Activated CD8-positive, alpha-beta memory T cell treated with anti-CD3 and anti-CD28 coated beads, Interleukin-2, amount 10 ng/mL, durations not matched to agents 7 days and 5 days (primary cell): ENCODE measurements at regions of chr16 and their contacts with region 1.

Region 1: DNA sequence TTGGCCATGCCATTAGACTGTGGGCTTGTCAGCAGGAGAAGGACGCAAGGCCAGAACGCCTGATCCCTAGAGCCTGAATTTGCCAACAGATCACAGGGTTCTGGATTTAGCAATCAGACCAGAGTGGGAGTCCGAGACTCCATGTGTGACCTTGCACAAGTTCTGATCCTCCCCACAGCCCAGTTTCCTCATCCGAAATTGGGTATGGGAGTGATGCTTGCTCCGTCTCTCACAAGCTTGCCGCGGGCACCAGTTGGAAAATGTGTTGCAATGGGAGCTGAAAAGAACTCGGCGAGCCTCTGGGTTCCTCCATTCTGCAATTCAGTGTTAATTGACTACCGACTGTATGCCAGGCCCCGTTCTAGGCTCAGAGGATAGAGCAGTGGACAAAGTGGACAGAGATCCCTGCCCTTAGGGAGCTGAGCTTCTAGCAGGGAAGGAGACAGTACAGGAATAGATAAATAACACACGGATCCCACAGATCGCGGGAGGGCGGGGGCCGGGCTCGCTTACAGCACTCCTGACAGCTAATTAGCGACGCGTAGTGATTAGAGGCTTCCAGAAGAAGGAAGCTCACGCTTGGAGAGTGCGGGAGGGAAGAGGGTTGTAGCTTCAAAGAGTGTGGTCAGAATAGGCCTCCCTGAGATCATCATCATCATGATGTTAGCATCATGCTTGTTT is 150.4 kb upstream of the CIBAR2 start:
- DNase-seq: no peak
- ATAC-seq: no peak
- H3K4me3 Mint-ChIP-seq: no peak overlapping the region
- H3K27ac Mint-ChIP-seq: no peak overlapping the region
- H3K4me1 Mint-ChIP-seq: no peaks in the 10 kb centered on the region
- H3K27me3 Mint-ChIP-seq: peaks cover 41% of the 10 kb centered on the region

Region 2: GRCh38 chr16:85220125-85220839 is 42.4 kb before region 1 on chr16:
- CTCF ChIA-PET with region 1: no interaction called
- DNase-seq: no peak
- ATAC-seq: no peak
- H3K4me3 Mint-ChIP-seq: no peak overlapping the region
- H3K27ac Mint-ChIP-seq: no peak overlapping the region
- H3K4me1 Mint-ChIP-seq: no peaks in the 10 kb centered on the region
- H3K27me3 Mint-ChIP-seq: no peaks in the 10 kb centered on the region

Region 3: DNA sequence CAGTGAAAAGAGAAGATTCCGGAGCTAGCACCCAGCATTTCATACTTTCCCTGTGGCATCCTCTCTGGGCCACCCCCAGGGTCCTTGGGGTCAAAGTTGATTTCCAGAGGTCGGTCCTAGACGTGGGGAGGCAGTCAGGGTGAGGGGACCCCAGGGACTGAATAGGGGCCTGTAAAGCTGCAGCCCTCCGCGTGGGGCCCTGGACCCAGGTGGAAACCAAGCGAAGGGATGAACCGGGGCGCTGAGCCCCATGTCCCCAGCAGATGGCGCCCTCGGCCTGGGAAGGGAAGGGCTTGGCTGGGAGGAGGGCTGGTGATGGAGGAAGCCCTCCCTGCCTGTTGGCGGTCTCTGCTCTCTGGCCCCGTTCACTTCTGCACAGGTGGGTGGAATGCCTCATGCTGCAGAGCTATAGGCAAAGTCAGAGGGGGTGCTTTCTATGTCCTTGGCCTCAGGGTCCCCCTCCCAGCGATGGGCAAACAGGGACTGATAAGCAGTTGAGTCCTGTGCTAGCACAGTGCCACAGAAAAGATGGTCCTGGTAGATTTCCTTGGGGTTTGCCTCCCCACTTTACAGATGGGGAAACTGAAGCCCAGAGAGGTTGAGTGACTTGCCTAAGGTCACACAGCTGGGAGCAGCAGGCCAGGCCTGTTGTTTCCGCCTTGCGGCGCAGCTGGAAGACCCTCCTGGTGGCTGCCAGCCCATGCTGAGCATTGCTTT is 13.0 kb after region 1 on chr16:
- CTCF ChIA-PET with region 1: interaction called, 12 read pairs
- DNase-seq: peak; percentile 71
- ATAC-seq: peak; percentile 76
- H3K4me3 Mint-ChIP-seq: no peak overlapping the region
- H3K27ac Mint-ChIP-seq: no peak overlapping the region
- H3K4me1 Mint-ChIP-seq: no peaks in the 10 kb centered on the region
- H3K27me3 Mint-ChIP-seq: no peaks in the 10 kb centered on the region

Region 4: GRCh38 chr16:85286970-85287824 is 24.5 kb after region 1 on chr16:
- CTCF ChIA-PET with region 1: no interaction called
- DNase-seq: no peak
- ATAC-seq: no peak
- H3K4me3 Mint-ChIP-seq: no peak overlapping the region
- H3K27ac Mint-ChIP-seq: no peak overlapping the region
- H3K4me1 Mint-ChIP-seq: no peaks in the 10 kb centered on the region
- H3K27me3 Mint-ChIP-seq: peaks cover 1% of the 10 kb centered on the region